Right ventricle myocardium inferior (tissue), 1 donor: ENCODE measurements at regions of chr4 and their contacts with region 1.

Region 1: DNA sequence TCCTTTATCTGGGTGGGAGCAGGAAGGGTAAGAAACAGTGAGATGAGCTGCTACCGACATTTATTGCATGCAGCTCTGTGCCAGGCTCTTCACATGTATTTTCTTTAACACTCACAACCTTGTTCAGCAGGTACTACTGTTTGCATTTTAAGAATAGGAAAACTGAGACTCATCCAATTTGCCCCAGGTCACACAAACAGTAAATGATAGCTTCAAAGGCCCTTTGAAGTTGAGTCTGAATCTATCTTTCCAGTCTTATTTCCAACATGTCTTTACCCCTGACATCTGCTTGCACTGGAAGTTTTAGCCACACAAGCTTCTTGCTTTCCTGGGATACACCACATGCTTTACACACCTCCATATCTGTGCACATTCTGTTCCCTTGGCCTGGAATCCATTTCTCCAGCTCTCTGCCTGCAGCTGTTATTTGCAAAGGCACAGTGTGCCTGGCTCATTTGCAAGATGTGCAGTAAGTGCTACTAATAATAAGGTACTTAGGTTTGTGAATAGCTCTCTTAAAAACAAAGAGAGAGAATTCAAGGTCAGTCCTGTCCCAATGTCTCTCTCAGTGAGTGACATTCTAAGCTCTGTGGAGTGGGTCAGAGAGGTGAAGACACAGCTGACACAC is 61.2 kb downstream of the METTL14 start:
- DNase-seq: peak; percentile 62
- ATAC-seq: peak; percentile 94

Region 2: GRCh38 chr4:118772081-118772766 is 25.8 kb after region 1 on chr4:
- intact Hi-C with region 1: loop called (anchors 2 kb)
- DNase-seq: no peak
- ATAC-seq: peak; percentile 73

Region 3: DNA sequence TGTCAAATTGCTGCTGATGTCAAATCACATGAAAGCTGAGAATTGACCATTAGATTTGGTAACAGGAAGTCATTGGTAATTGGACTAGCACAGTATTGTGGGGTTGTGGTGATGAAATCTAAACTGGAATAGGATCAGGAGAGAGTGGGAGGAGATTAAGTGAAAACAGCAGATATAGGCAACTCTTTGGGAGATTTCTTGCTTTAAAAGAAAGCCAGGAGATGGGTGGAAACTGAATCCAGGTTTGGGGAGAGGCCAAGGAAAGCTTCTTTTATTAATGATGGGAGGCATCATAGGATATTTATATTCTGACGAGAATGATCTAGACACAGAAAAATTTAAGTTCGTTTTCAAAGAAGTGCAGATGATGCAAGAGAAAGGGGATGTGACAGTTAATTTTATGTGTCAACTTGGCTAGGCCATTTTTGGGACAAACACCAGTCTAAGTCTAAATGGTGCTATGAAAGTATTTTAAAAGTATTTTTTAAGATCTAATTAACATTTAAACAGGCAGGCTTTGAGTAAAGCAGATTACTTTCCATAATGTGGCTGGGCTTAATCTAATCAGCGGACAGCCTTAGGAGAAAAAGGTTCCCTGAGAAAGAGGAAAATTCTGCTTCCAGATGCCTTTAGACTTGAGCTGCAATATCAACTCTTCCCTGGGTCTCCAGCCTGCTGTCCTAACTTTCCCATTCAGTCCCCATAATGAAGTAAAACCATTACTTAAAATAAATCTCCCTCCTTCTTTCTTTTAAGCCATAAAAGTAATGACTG is 64.8 kb after region 1 on chr4:
- intact Hi-C with region 1: no loop called
- DNase-seq: no peak
- ATAC-seq: peak; percentile 60

Region 4: GRCh38 chr4:118968005-118968404 is 221.6 kb after region 1 on chr4:
- intact Hi-C with region 1: loop called (anchors 2 kb)
- DNase-seq: no peak
- ATAC-seq: peak; percentile 85

Region 5: GRCh38 chr4:119151161-119151560 is 404.8 kb after region 1 on chr4:
- intact Hi-C with region 1: loop called (anchors 5 kb)
- DNase-seq: no peak
- ATAC-seq: peak; percentile 91